ENCODE measurements at regions of chr7 and their contacts with region 1.

Region 1: GRCh38 chr7:38215735-38216670 is 38.0 kb downstream of the STARD3NL start:
- DNase-seq: peak; percentile 90
- ATAC-seq: peak; percentile 75
- H3K4me3 Mint-ChIP-seq: no peak overlapping the region
- H3K27ac Mint-ChIP-seq: peak overlapping the region; percentile 47
- H3K4me1 Mint-ChIP-seq: peaks cover 40% of the 10 kb centered on the region
- H3K27me3 Mint-ChIP-seq: no peaks in the 10 kb centered on the region
- CTCF ChIP-seq: peak; percentile 97

Region 2: GRCh38 chr7:37901236-37901827 is 314.7 kb before region 1 on chr7:
- CTCF ChIA-PET with region 1: interaction called, 13 read pairs
- POLR2A ChIA-PET with region 1: no interaction called
- intact Hi-C with region 1: no loop called
- DNase-seq: no peak
- ATAC-seq: peak; percentile 42
- H3K4me3 Mint-ChIP-seq: no peak overlapping the region
- H3K27ac Mint-ChIP-seq: no peak overlapping the region
- H3K4me1 Mint-ChIP-seq: no peaks in the 10 kb centered on the region
- H3K27me3 Mint-ChIP-seq: peaks cover 2% of the 10 kb centered on the region
- CTCF ChIP-seq: no peak

Region 3: GRCh38 chr7:38070718-38071117 is 145.3 kb before region 1 on chr7:
- CTCF ChIA-PET with region 1: no interaction called
- POLR2A ChIA-PET with region 1: no interaction called
- intact Hi-C with region 1: no loop called
- DNase-seq: peak; percentile 42
- ATAC-seq: no peak
- H3K4me3 Mint-ChIP-seq: no peak overlapping the region
- H3K27ac Mint-ChIP-seq: no peak overlapping the region
- H3K4me1 Mint-ChIP-seq: no peaks in the 10 kb centered on the region
- H3K27me3 Mint-ChIP-seq: peaks cover 6% of the 10 kb centered on the region
- CTCF ChIP-seq: peak; percentile 35

Region 4: GRCh38 chr7:38178004-38178694 is 37.9 kb before region 1 on chr7 and contains the start of gene STARD3NL:
- CTCF ChIA-PET with region 1: interaction called, 32 read pairs
- POLR2A ChIA-PET with region 1: no interaction called
- intact Hi-C with region 1: no loop called
- DNase-seq: peak; percentile 94
- ATAC-seq: peak; percentile 98
- H3K4me3 Mint-ChIP-seq: peak within 1 kb of the TSS; percentile 83
- H3K27ac Mint-ChIP-seq: peak within 1 kb of the TSS; percentile 91
- H3K4me1 Mint-ChIP-seq: peaks cover 32% of the 10 kb centered on the region
- H3K27me3 Mint-ChIP-seq: no peaks in the 10 kb centered on the region
- CTCF ChIP-seq: no peak
- total RNA-seq, gene STARD3NL: 28.0 to 28.8 TPM

Region 5: DNA sequence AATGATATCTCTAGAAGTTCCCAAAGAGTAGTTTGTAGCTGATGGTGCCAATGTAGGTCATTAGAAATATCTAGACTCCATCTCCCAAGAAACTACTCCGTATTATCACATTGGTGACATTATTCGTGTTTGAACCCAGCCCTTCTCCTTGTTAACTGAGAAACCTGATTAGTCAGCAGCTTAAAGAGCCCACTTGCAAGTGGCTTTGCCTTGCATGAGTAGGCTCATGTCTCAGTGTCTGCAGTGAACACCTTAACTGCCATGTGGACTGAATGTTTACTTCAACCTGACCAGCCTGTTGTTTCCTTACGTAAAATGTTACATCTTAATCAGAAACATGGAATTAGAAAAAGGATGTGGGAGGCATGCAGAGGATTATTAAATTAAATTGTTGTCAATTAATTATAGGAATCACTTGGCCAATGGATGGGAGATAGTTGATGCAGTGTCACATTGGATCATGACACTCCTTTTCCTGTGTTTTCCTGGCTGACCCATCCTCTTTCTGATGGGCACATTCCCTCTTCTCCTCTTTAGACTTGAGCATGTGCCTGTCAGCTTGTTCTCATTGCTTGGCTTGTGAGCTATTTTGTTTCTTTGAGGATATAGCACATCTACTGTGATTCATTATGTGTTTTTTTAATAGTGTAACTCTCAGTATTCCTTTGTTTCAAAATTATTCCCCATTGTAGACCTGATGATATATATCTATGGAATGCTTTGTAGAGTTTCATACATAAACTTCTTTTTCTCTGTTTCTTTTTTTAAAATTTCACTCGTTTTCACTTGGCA is 20.0 kb before region 1 on chr7:
- CTCF ChIA-PET with region 1: interaction called, 85 read pairs
- POLR2A ChIA-PET with region 1: no interaction called
- intact Hi-C with region 1: no loop called
- DNase-seq: no peak
- ATAC-seq: no peak
- H3K4me3 Mint-ChIP-seq: no peak overlapping the region
- H3K27ac Mint-ChIP-seq: no peak overlapping the region
- H3K4me1 Mint-ChIP-seq: peaks cover 42% of the 10 kb centered on the region
- H3K27me3 Mint-ChIP-seq: no peaks in the 10 kb centered on the region
- CTCF ChIP-seq: no peak

Region 6: GRCh38 chr7:38312821-38313220 is 96.8 kb after region 1 on chr7:
- CTCF ChIA-PET with region 1: interaction called, 69 read pairs
- POLR2A ChIA-PET with region 1: no interaction called
- intact Hi-C with region 1: no loop called
- DNase-seq: no peak
- ATAC-seq: no peak
- H3K4me3 Mint-ChIP-seq: peak overlapping the region; percentile 46
- H3K27ac Mint-ChIP-seq: peak overlapping the region; percentile 69
- H3K4me1 Mint-ChIP-seq: peaks cover 38% of the 10 kb centered on the region
- H3K27me3 Mint-ChIP-seq: no peaks in the 10 kb centered on the region
- CTCF ChIP-seq: no peak

Region 7: DNA sequence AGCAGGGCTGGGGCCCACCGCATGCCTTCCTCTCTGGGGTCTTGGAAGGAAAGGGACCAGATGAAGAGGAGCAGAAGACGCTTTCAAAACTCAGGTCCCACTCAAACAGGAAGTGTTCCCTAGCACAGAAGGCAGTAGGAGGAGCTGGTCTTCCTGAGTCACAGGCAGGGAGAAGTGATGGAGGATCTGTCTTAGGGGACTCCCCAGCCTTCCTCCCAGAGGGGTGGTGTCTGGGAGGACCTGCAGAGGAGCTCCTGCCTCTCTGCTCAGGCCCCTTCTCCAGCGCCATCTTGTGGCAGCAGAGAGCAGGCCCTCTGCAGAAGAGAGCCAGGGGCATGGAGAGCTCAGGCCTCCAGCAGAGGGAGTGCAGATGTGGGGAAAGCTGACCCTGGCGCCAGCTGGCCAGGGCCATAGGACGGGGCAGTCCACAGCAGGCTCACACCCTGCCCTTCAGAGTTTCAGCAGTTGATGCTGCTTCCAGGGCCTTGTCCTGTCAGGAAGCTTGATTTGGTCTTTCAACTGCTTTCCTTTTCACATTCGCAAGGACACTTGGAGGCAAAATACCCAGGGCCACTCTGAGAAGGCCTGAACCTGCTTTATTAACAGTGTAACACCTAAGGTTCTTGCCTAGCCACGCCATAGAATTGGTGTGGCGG is 119.6 kb after region 1 on chr7:
- CTCF ChIA-PET with region 1: interaction called, 163 read pairs
- POLR2A ChIA-PET with region 1: interaction called, 3 read pairs
- intact Hi-C with region 1: loop called (anchors 5 kb)
- DNase-seq: peak; percentile 88
- ATAC-seq: peak; percentile 88
- H3K4me3 Mint-ChIP-seq: peak overlapping the region; percentile 71
- H3K27ac Mint-ChIP-seq: peak overlapping the region; percentile 88
- H3K4me1 Mint-ChIP-seq: peaks cover 44% of the 10 kb centered on the region
- H3K27me3 Mint-ChIP-seq: no peaks in the 10 kb centered on the region
- CTCF ChIP-seq: peak; percentile 86

Region 8: DNA sequence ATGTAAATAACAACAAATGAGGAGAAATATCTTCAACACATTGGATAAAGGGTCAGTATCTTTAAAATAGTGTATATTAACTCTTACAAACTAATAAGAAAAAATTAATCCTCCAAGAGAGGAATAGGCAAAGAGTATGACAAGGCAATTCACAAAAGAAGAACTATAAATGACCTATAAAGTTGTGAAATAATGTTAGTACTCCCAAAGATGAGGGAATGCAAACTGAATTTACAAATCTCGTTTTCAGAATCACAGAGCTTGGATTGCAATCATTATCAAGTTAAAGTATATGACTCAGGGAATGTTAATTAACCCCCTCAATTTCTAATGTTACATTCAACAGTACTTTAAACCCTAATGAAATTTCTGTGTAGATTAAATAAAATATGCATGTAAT is 144.8 kb after region 1 on chr7:
- CTCF ChIA-PET with region 1: interaction called, 247 read pairs
- POLR2A ChIA-PET with region 1: no interaction called
- intact Hi-C with region 1: loop called (anchors 5 kb)
- DNase-seq: no peak
- ATAC-seq: no peak
- H3K4me3 Mint-ChIP-seq: peak overlapping the region; percentile 97
- H3K27ac Mint-ChIP-seq: peak overlapping the region; percentile 95
- H3K4me1 Mint-ChIP-seq: peaks cover 62% of the 10 kb centered on the region
- H3K27me3 Mint-ChIP-seq: no peaks in the 10 kb centered on the region
- CTCF ChIP-seq: no peak